ENCODE measurements at regions of chr22 and their contacts with region 1.

Region 1: DNA sequence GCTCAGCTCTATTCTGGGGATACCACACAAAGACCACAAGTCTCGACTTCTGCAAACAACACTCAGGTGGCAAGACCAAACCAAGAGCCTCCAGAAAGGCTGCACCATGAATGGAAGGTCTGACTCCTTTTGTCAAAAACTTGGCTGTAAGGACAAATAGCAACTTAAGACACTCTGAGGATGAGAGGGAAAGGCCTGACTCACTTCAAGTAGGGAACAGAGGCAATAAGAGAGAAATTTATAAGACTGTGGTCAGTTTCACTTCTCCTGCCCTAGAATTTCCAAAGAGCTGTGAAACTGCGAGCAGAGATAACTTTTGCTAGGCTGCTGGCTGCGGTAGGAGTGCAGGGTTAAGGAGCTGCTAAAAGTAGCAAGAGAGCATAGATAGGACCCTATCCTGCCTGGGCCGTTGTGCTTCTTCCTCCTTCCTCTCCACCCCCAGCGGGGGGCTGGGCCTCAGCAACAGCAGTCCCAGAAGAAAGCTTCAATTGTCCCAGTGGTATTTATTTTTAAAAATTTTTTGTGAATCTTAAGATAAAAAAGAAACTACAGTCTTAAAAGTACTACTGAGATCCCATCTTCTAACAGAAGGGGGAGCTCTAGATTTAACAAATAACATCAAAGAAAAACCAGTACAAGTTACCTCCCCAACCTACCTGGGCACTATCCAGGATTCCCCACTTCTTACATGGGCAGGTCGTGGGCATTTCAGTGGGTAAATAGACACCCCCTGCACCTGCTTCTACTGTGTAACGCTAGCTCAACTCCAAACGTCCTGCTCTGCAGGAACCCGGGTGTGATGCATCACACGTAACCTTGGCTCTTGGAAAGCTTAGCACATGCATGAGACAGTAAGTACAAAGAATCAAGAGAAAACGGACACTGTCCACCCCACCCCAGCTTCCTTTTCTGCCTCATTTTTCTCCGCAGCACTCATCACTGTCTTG is 66.4 kb downstream of the SGSM3 start:
- DNase-seq: peak in 1 of 2 donors; percentile 51
- ATAC-seq: peak; percentile 72 to 83 (median 77)
- H3K4me3 ChIP-seq: peak overlapping the region in 6 of 10 donors; percentile 4 to 37 (median 32)
- H3K27ac ChIP-seq: peak overlapping the region in 8 of 10 donors; percentile 36 to 78 (median 65)
- H3K4me1 ChIP-seq: peaks cover 2 to 98% (median 36%) of the 10 kb centered on the region in 9 donors
- H3K27me3 ChIP-seq: no peaks in the 10 kb centered on the region
- CTCF ChIP-seq: peak; percentile 55 to 84 (median 71)

Region 2: GRCh38 chr22:40363059-40363458 is 73.7 kb before region 1 on chr22:
- intact Hi-C with region 1: no loop called
- DNase-seq: no peak
- ATAC-seq: no peak
- H3K4me3 ChIP-seq: no peak overlapping the region
- H3K27ac ChIP-seq: no peak overlapping the region
- H3K4me1 ChIP-seq: peaks cover 0 to 4% (median 0%) of the 10 kb centered on the region in 9 donors
- H3K27me3 ChIP-seq: no peaks in the 10 kb centered on the region
- CTCF ChIP-seq: no peak

Region 3: DNA sequence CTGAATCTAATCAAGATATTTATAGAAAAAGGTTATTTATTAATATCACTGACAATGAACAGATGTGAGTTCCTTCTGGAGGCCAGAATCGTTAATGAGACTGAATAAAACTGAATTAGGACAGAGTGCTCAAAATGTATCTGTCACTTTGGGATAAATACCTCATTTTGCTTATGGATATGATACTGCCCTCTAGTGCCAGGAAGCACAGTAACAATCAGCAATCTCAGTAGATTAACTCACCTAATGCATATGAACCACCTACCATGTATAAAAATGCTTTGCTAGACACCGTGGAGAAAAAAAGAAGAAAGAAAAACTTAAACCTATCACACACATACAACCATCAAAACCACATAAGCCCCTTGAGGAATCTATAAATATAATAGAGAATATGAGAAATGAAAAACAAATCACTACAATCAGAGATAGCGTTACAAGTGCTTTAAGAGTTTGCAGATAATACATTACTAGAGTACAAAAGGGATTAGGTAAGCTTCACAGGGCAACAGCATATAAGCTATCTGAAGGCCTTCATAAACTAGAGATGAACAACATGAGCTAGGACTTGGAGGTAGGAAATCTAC is 51.0 kb after region 1 on chr22:
- intact Hi-C with region 1: loop called in 7 of 10 experiments (anchors 2 to 5 kb)
- DNase-seq: no peak
- ATAC-seq: no peak
- H3K4me3 ChIP-seq: no peak overlapping the region
- H3K27ac ChIP-seq: peak overlapping the region in 3 of 10 donors; percentile 17 to 39 (median 34)
- H3K4me1 ChIP-seq: peaks cover 0 to 69% (median 51%) of the 10 kb centered on the region in 9 donors
- H3K27me3 ChIP-seq: no peaks in the 10 kb centered on the region
- CTCF ChIP-seq: peak; percentile 25 to 77 (median 61)

Region 4: GRCh38 chr22:40525249-40525884 is 88.6 kb after region 1 on chr22:
- intact Hi-C with region 1: loop called in 2 of 10 experiments (anchors 5 kb)
- DNase-seq: peak; percentile 31 to 50
- ATAC-seq: peak in 2 of 8 donors; percentile 49
- H3K4me3 ChIP-seq: no peak overlapping the region
- H3K27ac ChIP-seq: no peak overlapping the region
- H3K4me1 ChIP-seq: peaks cover 0 to 29% (median 0%) of the 10 kb centered on the region in 9 donors
- H3K27me3 ChIP-seq: no peaks in the 10 kb centered on the region
- CTCF ChIP-seq: peak; percentile 52 to 84 (median 71)

Region 5: GRCh38 chr22:40552070-40552469 is 115.3 kb after region 1 on chr22:
- intact Hi-C with region 1: loop called in 1 of 10 experiments (anchors 10 kb)
- DNase-seq: peak; percentile 75 to 78
- ATAC-seq: peak; percentile 73 to 96 (median 87)
- H3K4me3 ChIP-seq: no peak overlapping the region
- H3K27ac ChIP-seq: no peak overlapping the region
- H3K4me1 ChIP-seq: peaks cover 0 to 21% (median 10%) of the 10 kb centered on the region in 9 donors
- H3K27me3 ChIP-seq: no peaks in the 10 kb centered on the region
- CTCF ChIP-seq: peak; percentile 12 to 67 (median 39)

Region 6: GRCh38 chr22:40567106-40567505 is 130.3 kb after region 1 on chr22:
- intact Hi-C with region 1: no loop called
- DNase-seq: no peak
- ATAC-seq: no peak
- H3K4me3 ChIP-seq: no peak overlapping the region
- H3K27ac ChIP-seq: no peak overlapping the region
- H3K4me1 ChIP-seq: peaks cover 0 to 18% (median 6%) of the 10 kb centered on the region in 9 donors
- H3K27me3 ChIP-seq: no peaks in the 10 kb centered on the region
- CTCF ChIP-seq: no peak

Region 7: GRCh38 chr22:40645579-40646197 is 208.9 kb after region 1 on chr22:
- intact Hi-C with region 1: loop called (anchors 1 to 5 kb)
- DNase-seq: no peak
- ATAC-seq: peak in 2 of 8 donors; percentile 3 to 5
- H3K4me3 ChIP-seq: no peak overlapping the region
- H3K27ac ChIP-seq: peak overlapping the region in 2 of 10 donors; percentile 37 to 60
- H3K4me1 ChIP-seq: peaks cover 0 to 11% (median 0%) of the 10 kb centered on the region in 9 donors
- H3K27me3 ChIP-seq: no peaks in the 10 kb centered on the region
- CTCF ChIP-seq: no peak

Region 8: DNA sequence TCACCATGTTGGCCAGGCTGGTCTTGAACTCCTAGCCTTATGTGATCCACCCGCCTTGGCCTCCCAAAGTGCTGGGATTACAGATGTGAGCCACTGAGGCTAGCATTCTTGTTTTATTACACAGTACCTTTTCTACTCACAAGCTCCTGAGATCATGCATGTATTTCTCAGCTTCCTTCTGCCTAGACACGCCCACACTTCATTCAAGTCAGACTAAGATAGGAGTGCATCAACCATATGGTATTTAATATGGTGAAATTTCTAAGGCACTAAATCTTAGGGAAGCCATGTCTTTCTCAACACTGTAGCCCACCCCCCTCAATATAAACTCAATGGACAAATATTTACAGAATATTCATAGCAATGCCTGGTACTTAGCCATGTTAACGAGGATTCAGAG is 320.3 kb after region 1 on chr22:
- intact Hi-C with region 1: loop called in 2 of 10 experiments (anchors 5 kb)
- DNase-seq: no peak
- ATAC-seq: no peak
- H3K4me3 ChIP-seq: no peak overlapping the region
- H3K27ac ChIP-seq: no peak overlapping the region
- H3K4me1 ChIP-seq: peaks cover 0 to 4% (median 0%) of the 10 kb centered on the region in 9 donors
- H3K27me3 ChIP-seq: no peaks in the 10 kb centered on the region
- CTCF ChIP-seq: no peak